ENCODE measurements at regions of chr5 and their contacts with region 1.

Region 1: GRCh38 chr5:151164686-151165392 is 7.3 kb upstream of the ANXA6 start:
- DNase-seq: no peak
- H3K4me3 ChIP-seq: no peak overlapping the region
- CTCF ChIP-seq: peak; percentile 87

Region 2: DNA sequence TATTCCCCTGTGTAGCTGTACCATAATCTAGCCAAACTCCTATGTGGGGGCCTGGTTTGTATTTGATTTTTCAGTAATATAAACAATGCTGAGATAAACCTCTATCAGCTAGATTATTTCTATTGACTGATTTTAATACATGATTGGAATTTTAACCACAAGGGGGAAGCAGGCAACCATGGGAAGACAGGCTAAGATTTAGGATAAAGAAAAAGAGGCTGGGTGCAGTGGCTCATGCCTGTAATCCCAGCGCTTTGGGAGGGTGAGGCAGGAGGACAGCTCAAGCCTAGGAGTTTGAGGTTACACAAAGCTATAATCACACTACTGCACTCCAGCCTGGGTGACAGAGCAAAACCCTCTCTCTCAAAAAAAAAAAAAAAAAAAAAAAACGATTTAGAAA is 162.6 kb before region 1 on chr5:
- CTCF ChIA-PET with region 1: interaction called, 107 read pairs
- POLR2A ChIA-PET with region 1: interaction called, 3 read pairs
- DNase-seq: no peak
- H3K4me3 ChIP-seq: no peak overlapping the region
- CTCF ChIP-seq: peak; percentile 2

Region 3: DNA sequence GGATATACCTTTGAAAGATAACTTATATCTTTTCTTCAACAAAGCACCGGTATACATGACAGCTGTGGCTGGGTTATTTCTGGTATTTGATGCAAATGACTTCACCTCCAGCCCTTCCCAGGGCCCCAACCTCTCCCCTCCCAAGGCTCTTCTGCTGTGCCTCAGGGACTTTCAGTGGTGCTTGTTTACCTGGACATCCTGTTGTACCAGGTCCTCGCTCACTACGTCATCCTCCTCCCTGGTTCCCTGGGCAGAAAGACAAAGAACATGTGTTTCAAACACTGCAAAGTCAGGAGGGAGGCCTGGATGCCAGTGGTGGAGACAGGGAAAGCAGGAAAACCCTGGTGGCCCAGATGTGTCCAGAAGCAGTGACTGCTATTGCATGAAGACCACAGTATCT is 30.6 kb before region 1 on chr5:
- CTCF ChIA-PET with region 1: interaction called, 32 read pairs
- POLR2A ChIA-PET with region 1: no interaction called
- DNase-seq: no peak
- H3K4me3 ChIP-seq: no peak overlapping the region
- CTCF ChIP-seq: no peak

Region 4: GRCh38 chr5:151141535-151141934 is 23.3 kb before region 1 on chr5:
- CTCF ChIA-PET with region 1: interaction called, 30 read pairs
- POLR2A ChIA-PET with region 1: no interaction called
- DNase-seq: no peak
- H3K4me3 ChIP-seq: no peak overlapping the region
- CTCF ChIP-seq: no peak

Region 5: GRCh38 chr5:151150471-151151262 is 14.2 kb before region 1 on chr5:
- CTCF ChIA-PET with region 1: interaction called, 29 read pairs
- POLR2A ChIA-PET with region 1: no interaction called
- DNase-seq: no peak
- H3K4me3 ChIP-seq: no peak overlapping the region
- CTCF ChIP-seq: no peak

Measured in AG04449 (cell line).